HCT116 (cell line): ENCODE measurements at regions of chr1 and their contacts with region 1.

Region 1: DNA sequence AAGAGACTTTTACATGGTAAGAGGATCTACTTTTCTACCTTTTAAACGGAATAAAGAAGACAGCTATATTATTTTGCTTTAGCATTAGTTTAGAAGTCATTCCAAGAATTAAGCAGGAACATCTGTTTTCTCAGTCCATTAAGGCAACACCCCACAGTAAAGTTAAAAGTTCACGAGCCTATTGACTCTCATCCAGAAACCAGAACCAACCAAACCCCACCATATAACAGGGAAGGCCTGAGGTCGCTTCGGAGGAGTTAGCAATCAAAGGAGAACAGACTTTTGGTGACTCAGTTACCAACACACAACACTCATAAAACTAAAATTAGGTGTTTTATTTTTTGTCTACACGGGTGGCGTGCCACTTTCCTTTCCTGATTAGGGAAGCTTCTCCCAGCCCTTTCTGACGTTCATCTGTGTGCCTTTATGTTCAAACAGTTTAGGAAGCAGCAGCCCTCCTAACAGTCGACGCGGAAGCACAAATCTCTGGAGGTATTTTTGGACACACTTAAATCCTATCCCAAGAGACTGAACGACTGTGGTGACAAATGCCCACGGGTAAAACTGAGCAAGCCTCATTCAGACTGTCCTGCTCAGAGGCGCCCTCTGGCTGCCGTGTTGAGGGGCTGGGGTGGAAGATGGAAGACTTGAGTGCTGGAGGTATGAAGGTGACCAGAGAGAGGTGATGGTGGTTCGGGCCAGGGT is 8.6 kb upstream of the PLA2G2C start:
- DNase-seq: peak; percentile 56
- ATAC-seq: peak; percentile 98
- H3K4me3 ChIP-seq: no peak overlapping the region
- H3K27ac ChIP-seq: no peak overlapping the region
- H3K4me1 ChIP-seq: peaks cover 0 to 3% of the 10 kb centered on the region in 2 experiments; a peak in 1 of 4 replicates
- H3K27me3 ChIP-seq: peaks cover 21% of the 10 kb centered on the region; the same call in 1 of the 2 replicates
- CTCF ChIP-seq: peak; percentile 78 to 98 (median 98)
- POLR2A ChIP-seq: no peak
- RAD21 ChIP-seq: peak; percentile 71

Region 2: GRCh38 chr1:19918057-19918456 is 276.9 kb before region 1 on chr1:
- CTCF ChIA-PET with region 1: no interaction called
- POLR2A ChIA-PET with region 1: no interaction called
- RAD21 ChIA-PET with region 1: interaction called in 1 of 2 experiments, 3 read pairs
- intact Hi-C with region 1: loop called (anchors 1 kb)
- DNase-seq: peak; percentile 75
- ATAC-seq: peak; percentile 80
- H3K4me3 ChIP-seq: no peak overlapping the region
- H3K27ac ChIP-seq: no peak overlapping the region
- H3K4me1 ChIP-seq: peaks cover 0 to 13% of the 10 kb centered on the region in 2 experiments; a peak in 2 of 4 replicates
- H3K27me3 ChIP-seq: no peaks in the 10 kb centered on the region
- CTCF ChIP-seq: peak; percentile 91 to 93 (median 92)
- POLR2A ChIP-seq: no peak
- RAD21 ChIP-seq: peak; percentile 99

Region 3: DNA sequence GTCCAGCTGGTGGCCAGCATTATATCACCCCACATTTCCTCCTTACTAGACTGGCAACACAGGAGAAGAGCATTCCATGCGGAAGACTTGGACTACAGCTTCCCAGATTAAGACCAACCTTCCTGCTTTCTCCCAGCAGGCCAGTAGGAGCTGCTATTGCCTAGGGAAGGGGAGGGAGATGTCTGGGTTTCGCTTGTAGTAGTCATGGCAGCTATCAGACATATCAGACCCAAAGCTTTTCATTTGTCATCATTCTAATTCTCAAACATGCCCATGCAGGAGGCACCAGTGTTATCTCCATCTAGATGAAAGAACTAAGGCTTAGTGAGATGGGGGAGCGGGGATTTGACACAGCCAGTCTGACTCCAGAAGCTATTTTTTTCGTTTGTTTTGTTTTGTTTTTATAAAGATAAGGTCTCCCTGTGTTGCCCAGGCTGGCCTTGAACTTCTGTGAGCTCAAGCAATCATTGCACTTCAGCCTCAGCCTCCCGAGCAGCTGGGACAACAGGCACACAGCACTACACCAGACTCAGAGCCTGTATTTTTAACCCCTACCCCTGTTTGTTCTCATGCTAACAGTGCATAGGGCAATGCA is 220.0 kb before region 1 on chr1:
- CTCF ChIA-PET with region 1: interaction called, 13 read pairs
- POLR2A ChIA-PET with region 1: no interaction called
- RAD21 ChIA-PET with region 1: no interaction called
- intact Hi-C with region 1: loop called (anchors 2 kb)
- DNase-seq: peak; percentile 60
- ATAC-seq: peak; percentile 98
- H3K4me3 ChIP-seq: no peak overlapping the region
- H3K27ac ChIP-seq: no peak overlapping the region
- H3K4me1 ChIP-seq: 0 out of 4 replicates have a peak, but pooled peaks cover 0 to 3% of the 10 kb centered on the region in 2 experiments
- H3K27me3 ChIP-seq: 0 out of 2 replicates have a peak, but pooled peaks cover 4% of the 10 kb centered on the region
- CTCF ChIP-seq: peak; percentile 70 to 97 (median 87); a peak in 5 of 6 replicates
- POLR2A ChIP-seq: no peak
- RAD21 ChIP-seq: peak; percentile 94

Region 4: DNA sequence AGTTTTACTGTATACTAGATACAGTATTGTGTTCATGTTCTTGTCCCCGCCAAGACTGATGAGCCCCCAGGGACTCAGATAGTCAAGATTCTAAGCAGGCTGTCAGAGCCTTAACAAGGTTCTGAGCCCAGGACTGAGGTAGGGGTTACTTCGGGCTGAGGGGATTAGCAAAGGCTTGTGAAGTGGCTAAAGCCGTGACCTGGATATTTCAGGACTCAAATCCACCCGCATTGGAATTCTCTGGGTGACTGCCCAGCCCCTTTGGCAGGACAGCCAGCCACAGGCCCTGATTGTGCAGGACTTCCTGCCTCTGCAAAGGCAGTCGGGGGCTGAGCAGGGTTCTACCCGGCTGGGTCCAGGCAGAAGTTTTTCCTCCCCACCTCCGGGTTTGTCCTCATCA is 125.0 kb before region 1 on chr1 and contains the start of gene PLA2G5:
- CTCF ChIA-PET with region 1: no interaction called
- POLR2A ChIA-PET with region 1: no interaction called
- RAD21 ChIA-PET with region 1: no interaction called
- intact Hi-C with region 1: no loop called
- DNase-seq: no peak
- ATAC-seq: no peak
- H3K4me3 ChIP-seq: no peak within 1 kb of the TSS
- H3K27ac ChIP-seq: no peak within 1 kb of the TSS
- H3K4me1 ChIP-seq: no peaks in the 10 kb centered on the region
- H3K27me3 ChIP-seq: no peaks in the 10 kb centered on the region
- CTCF ChIP-seq: no peak
- POLR2A ChIP-seq: no peak
- RAD21 ChIP-seq: no peak
- total RNA-seq, gene PLA2G5: not detected

Region 5: GRCh38 chr1:20100632-20101355 is 94.1 kb before region 1 on chr1:
- CTCF ChIA-PET with region 1: interaction called, 3 read pairs
- POLR2A ChIA-PET with region 1: no interaction called
- RAD21 ChIA-PET with region 1: no interaction called
- intact Hi-C with region 1: loop called (anchors 1 kb)
- DNase-seq: peak; percentile 52
- ATAC-seq: peak; percentile 96
- H3K4me3 ChIP-seq: no peak overlapping the region
- H3K27ac ChIP-seq: no peak overlapping the region
- H3K4me1 ChIP-seq: peaks cover 0 to 1% of the 10 kb centered on the region in 2 experiments; a peak in 1 of 4 replicates
- H3K27me3 ChIP-seq: no peaks in the 10 kb centered on the region
- CTCF ChIP-seq: peak; percentile 81 to 88 (median 87)
- POLR2A ChIP-seq: no peak
- RAD21 ChIP-seq: peak; percentile 98

Region 6: GRCh38 chr1:20165522-20165951 is 29.4 kb before region 1 on chr1:
- CTCF ChIA-PET with region 1: interaction called, 3 read pairs
- POLR2A ChIA-PET with region 1: no interaction called
- RAD21 ChIA-PET with region 1: no interaction called
- intact Hi-C with region 1: loop called (anchors 1 kb)
- DNase-seq: peak; percentile 16
- ATAC-seq: peak; percentile 83
- H3K4me3 ChIP-seq: no peak overlapping the region
- H3K27ac ChIP-seq: no peak overlapping the region
- H3K4me1 ChIP-seq: no peaks in the 10 kb centered on the region
- H3K27me3 ChIP-seq: no peaks in the 10 kb centered on the region
- CTCF ChIP-seq: peak; percentile 47 to 62 (median 55); a peak in 5 of 6 replicates
- POLR2A ChIP-seq: no peak
- RAD21 ChIP-seq: peak; percentile 68